ENCODE measurements at regions of chr4 and their contacts with region 1.

Region 1: GRCh38 chr4:166602068-166602467 is 632.2 kb downstream of the SPOCK3 start:
- DNase-seq: no peak
- ATAC-seq: no peak
- H3K4me3 ChIP-seq: no peak overlapping the region
- H3K27ac ChIP-seq: no peak overlapping the region
- H3K4me1 ChIP-seq: no peaks in the 10 kb centered on the region
- H3K27me3 ChIP-seq: no peaks in the 10 kb centered on the region
- CTCF ChIP-seq: no peak
- EP300 ChIP-seq: no peak
- POLR2A ChIP-seq: no peak
- RAD21 ChIP-seq: no peak

Region 2: GRCh38 chr4:166091912-166092510 is 510.1 kb before region 1 on chr4:
- CTCF ChIA-PET with region 1: no interaction called
- POLR2A ChIA-PET with region 1: no interaction called
- in situ Hi-C with region 1: no loop called
- intact Hi-C with region 1: no loop called
- DNase-seq: peak; percentile 13 to 48 (median 16)
- ATAC-seq: peak; percentile 71; the same call in 2 of the 3 replicates
- H3K4me3 ChIP-seq: no peak overlapping the region
- H3K27ac ChIP-seq: no peak overlapping the region
- H3K4me1 ChIP-seq: no peaks in the 10 kb centered on the region
- H3K27me3 ChIP-seq: no peaks in the 10 kb centered on the region
- CTCF ChIP-seq: peak; percentile 31 to 71 (median 40); a peak in 4 of 6 replicates
- EP300 ChIP-seq: no peak
- POLR2A ChIP-seq: no peak
- RAD21 ChIP-seq: peak; percentile 73 to 74

Region 3: GRCh38 chr4:166625018-166625637 is 23.1 kb after region 1 on chr4:
- CTCF ChIA-PET with region 1: no interaction called
- POLR2A ChIA-PET with region 1: no interaction called
- in situ Hi-C with region 1: no loop called
- intact Hi-C with region 1: loop called (anchors 1 kb)
- DNase-seq: no peak
- ATAC-seq: no peak
- H3K4me3 ChIP-seq: no peak overlapping the region
- H3K27ac ChIP-seq: no peak overlapping the region
- H3K4me1 ChIP-seq: no peaks in the 10 kb centered on the region
- H3K27me3 ChIP-seq: no peaks in the 10 kb centered on the region
- CTCF ChIP-seq: no peak
- EP300 ChIP-seq: no peak
- POLR2A ChIP-seq: no peak
- RAD21 ChIP-seq: no peak

Measured in K562 (cell line).